GM13976 (cell line): ENCODE measurements at regions of chr14 and their contacts with region 1.

Region 1: DNA sequence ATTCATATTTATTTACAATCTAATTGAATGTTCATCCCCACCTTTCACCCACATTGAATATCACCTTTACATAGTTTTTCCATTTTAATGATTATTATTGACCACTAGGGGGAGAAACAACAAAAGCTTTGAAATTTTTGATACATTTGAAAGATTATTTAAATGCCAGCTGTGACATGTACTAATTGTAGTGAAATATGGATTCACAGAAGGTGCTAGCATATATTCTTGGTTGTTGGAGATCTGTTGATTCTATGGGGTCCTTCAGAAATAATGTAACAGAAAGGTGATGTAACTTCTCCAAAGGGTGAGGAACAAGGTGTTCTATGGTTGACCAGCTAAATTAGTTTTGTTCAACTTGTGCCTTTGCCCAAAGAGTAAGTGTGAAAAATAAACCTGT is 22.4 kb upstream of the GPR33 start:
- DNase-seq: peak; percentile 36
- CTCF ChIP-seq: no peak

Region 2: GRCh38 chr14:31902002-31902401 is 391.8 kb after region 1 on chr14:
- in situ Hi-C with region 1: loop called (anchors 25 kb)
- DNase-seq: no peak
- CTCF ChIP-seq: no peak

Region 3: GRCh38 chr14:32076278-32077080 is 566.3 kb after region 1 on chr14:
- in situ Hi-C with region 1: loop called (anchors 25 kb)
- DNase-seq: peak; percentile 82
- CTCF ChIP-seq: no peak

Region 4: GRCh38 chr14:32252030-32252670 is 741.9 kb after region 1 on chr14:
- in situ Hi-C with region 1: loop called (anchors 10 kb)
- DNase-seq: peak; percentile 65
- CTCF ChIP-seq: peak; percentile 74

Region 5: DNA sequence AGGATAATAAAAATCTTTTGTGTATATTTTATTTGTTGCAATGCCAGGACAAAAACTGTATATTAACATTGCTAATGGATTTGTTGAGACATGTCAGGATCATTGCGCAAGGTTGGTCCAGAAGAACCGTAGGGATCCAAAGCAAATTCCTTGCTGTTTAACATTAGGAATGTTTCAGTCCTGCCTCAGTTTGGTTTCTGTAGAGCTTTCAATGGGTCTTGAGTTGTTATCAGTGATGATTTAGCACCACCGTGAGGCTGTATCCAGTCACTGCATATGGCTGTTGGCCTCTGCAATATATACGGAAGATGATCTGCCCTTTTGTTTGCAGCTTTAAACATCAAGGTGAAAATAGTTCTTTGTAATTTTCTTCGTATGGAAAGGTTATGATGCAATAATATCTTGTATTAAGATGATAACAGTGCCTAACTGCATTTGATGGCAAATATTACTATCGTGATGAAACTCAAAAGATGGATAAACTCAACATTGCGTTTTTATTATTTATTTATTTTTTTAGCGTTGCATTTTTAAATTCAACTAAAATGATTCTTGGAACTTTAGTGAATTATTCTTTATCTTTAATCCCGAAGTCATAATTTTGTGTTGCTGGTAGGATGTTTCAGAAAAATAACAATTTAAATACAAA is 1050.1 kb after region 1 on chr14:
- in situ Hi-C with region 1: loop called (anchors 25 kb)
- DNase-seq: peak; percentile 45
- CTCF ChIP-seq: peak; percentile 83